ENCODE measurements at regions of chr2 and their contacts with region 1.

Region 1: GRCh38 chr2:152335010-152335725 is at the start of gene FMNL2:
- DNase-seq: peak; percentile 86 to 90 (median 88)
- H3K4me3 ChIP-seq: peak within 1 kb of the TSS; percentile 89
- H3K27ac ChIP-seq: peak within 1 kb of the TSS; percentile 83 to 89
- H3K4me1 ChIP-seq: peaks cover 6% of the 10 kb centered on the region
- H3K27me3 ChIP-seq: no peaks in the 10 kb centered on the region
- CTCF ChIP-seq: no peak
- EP300 ChIP-seq: no peak
- POLR2A ChIP-seq: peak; percentile 51
- total RNA-seq, gene FMNL2: 30.3 to 89.1 (median 53.6) TPM

Region 2: GRCh38 chr2:152189622-152190495 is 145.3 kb before region 1 on chr2:
- intact Hi-C with region 1: loop called in 1 of 4 experiments (anchors 10 kb)
- DNase-seq: peak in 4 of 5 donors; percentile 36 to 59 (median 50)
- H3K4me3 ChIP-seq: no peak overlapping the region
- H3K27ac ChIP-seq: no peak overlapping the region
- H3K4me1 ChIP-seq: no peaks in the 10 kb centered on the region
- H3K27me3 ChIP-seq: no peaks in the 10 kb centered on the region
- CTCF ChIP-seq: peak; percentile 60 to 85 (median 83)
- EP300 ChIP-seq: no peak
- POLR2A ChIP-seq: no peak

Region 3: GRCh38 chr2:152466980-152467676 is 132.0 kb after region 1 on chr2:
- intact Hi-C with region 1: loop called in 1 of 4 experiments (anchors 10 kb)
- DNase-seq: no peak
- H3K4me3 ChIP-seq: no peak overlapping the region
- H3K27ac ChIP-seq: peak overlapping the region in 1 of 2 donors; percentile 80
- H3K4me1 ChIP-seq: peaks cover 45% of the 10 kb centered on the region
- H3K27me3 ChIP-seq: no peaks in the 10 kb centered on the region
- CTCF ChIP-seq: no peak
- EP300 ChIP-seq: no peak
- POLR2A ChIP-seq: no peak

Region 4: DNA sequence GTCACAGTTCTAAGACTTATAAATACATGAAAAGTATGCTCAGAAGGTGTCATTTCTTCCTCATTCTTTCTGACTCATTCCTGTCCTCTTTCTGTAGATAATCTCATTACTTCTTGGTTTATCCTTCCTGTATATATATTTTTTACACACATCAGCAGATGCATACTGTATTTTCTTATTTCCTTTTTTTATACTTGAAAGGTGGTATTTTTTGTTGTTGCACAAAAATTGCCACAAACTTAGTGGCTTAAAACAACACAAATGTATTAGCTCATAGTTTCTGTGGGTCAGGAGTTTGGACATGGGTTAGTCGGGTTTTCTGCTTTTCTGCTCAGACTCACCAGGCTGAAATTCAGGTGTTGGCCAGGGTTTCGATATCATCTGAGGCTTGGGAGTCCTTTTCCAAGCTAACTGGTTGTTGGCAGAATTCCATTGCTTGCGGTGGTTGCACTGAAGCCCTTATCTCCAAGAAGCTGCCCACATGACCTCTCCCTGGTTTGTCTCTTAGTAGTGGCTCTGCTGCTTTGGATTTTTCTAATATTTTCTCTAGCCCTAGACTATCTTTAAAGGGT is 162.4 kb after region 1 on chr2:
- intact Hi-C with region 1: no loop called
- DNase-seq: no peak
- H3K4me3 ChIP-seq: no peak overlapping the region
- H3K27ac ChIP-seq: no peak overlapping the region
- H3K4me1 ChIP-seq: peaks cover 19% of the 10 kb centered on the region
- H3K27me3 ChIP-seq: no peaks in the 10 kb centered on the region
- CTCF ChIP-seq: no peak
- EP300 ChIP-seq: no peak
- POLR2A ChIP-seq: no peak

Region 5: GRCh38 chr2:152627351-152627957 is 292.3 kb after region 1 on chr2:
- intact Hi-C with region 1: loop called in 2 of 4 experiments (anchors 5 to 10 kb)
- DNase-seq: no peak
- H3K4me3 ChIP-seq: no peak overlapping the region
- H3K27ac ChIP-seq: peak overlapping the region in 1 of 2 donors; percentile 10
- H3K4me1 ChIP-seq: peaks cover 3% of the 10 kb centered on the region
- H3K27me3 ChIP-seq: no peaks in the 10 kb centered on the region
- CTCF ChIP-seq: peak in 2 of 3 donors; percentile 60 to 63
- EP300 ChIP-seq: no peak
- POLR2A ChIP-seq: no peak

Region 6: DNA sequence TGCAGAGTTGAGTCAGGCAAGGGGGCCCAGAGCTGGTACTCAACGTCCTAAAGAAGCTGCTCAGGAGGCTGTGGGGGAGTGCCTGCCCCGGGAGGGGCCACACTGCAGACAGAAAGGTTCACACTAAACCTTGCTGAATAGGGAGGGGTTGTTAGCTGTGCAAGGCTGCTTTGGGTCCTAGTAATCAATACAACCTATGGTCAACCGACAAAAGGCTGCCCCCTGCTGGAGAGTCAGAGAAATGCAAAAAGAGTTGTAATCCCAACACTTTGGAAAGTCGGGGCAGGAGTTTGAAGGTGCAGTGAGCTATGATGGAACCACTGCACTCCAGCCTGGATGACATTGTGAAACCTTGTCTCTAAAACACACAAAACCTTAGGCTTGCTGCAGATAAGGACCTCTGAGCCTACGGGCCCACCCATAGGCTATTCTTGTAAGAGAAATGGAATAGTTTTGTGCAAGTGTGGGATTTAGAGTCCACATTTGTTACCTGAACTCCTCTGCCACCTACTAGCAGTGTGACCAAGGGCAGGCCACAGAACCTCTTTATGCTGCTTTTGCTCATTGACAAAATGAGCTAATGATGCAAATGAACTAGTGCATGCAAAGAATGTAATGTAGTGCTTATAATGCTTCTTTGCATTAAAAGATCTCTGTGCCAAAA is 300.6 kb after region 1 on chr2:
- intact Hi-C with region 1: loop called in 2 of 4 experiments (anchors 5 to 10 kb)
- DNase-seq: peak; percentile 34 to 65 (median 50)
- H3K4me3 ChIP-seq: no peak overlapping the region
- H3K27ac ChIP-seq: no peak overlapping the region
- H3K4me1 ChIP-seq: no peaks in the 10 kb centered on the region
- H3K27me3 ChIP-seq: no peaks in the 10 kb centered on the region
- CTCF ChIP-seq: peak; percentile 63 to 72 (median 67)
- EP300 ChIP-seq: no peak
- POLR2A ChIP-seq: no peak

Region 7: DNA sequence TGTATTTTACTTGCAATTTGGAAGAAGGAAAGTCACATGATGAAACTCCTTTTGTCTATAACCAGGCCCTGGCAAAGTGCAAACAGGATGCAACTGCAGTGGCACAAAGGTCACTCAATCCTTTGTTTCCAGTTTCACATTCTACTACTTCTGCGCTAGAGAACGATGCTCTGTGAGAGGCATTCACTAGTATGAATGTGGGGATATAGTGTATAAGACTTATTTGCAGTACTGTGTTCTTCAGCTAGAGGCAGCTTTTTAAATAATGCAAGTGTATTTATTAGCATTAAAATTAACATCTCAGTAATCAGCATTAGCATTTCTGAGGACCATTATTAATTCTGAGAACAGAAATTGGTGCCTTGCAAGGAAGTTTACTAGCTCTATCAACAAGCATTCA is 313.2 kb after region 1 on chr2:
- intact Hi-C with region 1: loop called in 1 of 4 experiments (anchors 10 kb)
- DNase-seq: no peak
- H3K4me3 ChIP-seq: no peak overlapping the region
- H3K27ac ChIP-seq: no peak overlapping the region
- H3K4me1 ChIP-seq: peaks cover 3% of the 10 kb centered on the region
- H3K27me3 ChIP-seq: no peaks in the 10 kb centered on the region
- CTCF ChIP-seq: peak in 1 of 3 donors; percentile 17
- EP300 ChIP-seq: no peak
- POLR2A ChIP-seq: no peak

Region 8: GRCh38 chr2:152730591-152731303 is 395.6 kb after region 1 on chr2:
- intact Hi-C with region 1: no loop called
- DNase-seq: no peak
- H3K4me3 ChIP-seq: no peak overlapping the region
- H3K27ac ChIP-seq: no peak overlapping the region
- H3K4me1 ChIP-seq: no peaks in the 10 kb centered on the region
- H3K27me3 ChIP-seq: no peaks in the 10 kb centered on the region
- CTCF ChIP-seq: no peak
- EP300 ChIP-seq: no peak
- POLR2A ChIP-seq: no peak

Region 9: GRCh38 chr2:153408710-153409385 is 1073.7 kb after region 1 on chr2:
- intact Hi-C with region 1: no loop called
- DNase-seq: no peak
- H3K4me3 ChIP-seq: no peak overlapping the region
- H3K27ac ChIP-seq: no peak overlapping the region
- H3K4me1 ChIP-seq: no peaks in the 10 kb centered on the region
- H3K27me3 ChIP-seq: no peaks in the 10 kb centered on the region
- CTCF ChIP-seq: no peak
- EP300 ChIP-seq: no peak
- POLR2A ChIP-seq: no peak

Measured in ovary (tissue), 10 donors.